ENCODE measurements at regions of chr22 and their contacts with region 1.

Region 1: DNA sequence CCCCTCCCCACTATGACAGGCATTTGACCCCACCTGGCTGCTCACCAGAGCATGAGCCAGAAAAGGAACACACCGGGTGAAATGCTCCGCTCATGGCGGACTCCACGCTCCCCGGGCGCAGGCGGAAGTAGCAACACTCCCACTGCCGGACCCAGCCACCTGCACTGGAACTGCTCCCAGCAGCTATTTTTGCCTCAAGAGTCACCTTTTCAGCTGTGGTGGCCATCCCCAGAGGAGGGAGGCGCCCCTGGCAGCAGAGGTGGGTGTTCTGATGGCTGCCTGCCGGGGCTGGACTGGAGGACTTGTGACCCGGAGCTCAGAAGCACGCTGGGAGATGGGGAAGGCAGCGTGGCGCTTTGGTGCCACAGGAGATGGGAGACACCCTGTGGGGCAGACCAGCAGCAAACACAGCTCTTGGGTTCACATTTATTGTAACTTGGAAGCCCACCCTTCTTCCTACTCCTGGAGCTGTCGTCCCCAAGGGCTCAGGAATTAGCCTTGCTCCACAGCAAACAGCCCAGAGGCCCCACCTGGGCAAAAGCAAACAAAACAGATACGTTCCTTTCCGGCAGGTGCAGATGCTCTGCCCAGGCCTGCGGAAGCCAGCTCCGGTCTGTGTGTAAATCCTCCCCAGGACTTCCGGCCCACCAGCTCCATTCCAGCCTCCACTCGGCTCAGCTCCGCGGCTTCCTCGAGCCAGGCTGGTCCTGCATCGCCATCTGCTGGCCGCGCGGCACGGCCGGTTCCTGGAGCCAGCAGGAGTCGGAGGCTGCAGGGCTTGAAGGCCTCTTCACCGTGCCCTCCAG is 3.7 kb downstream of the RPS19BP1 start:
- DNase-seq: peak; percentile 94
- ATAC-seq: peak; percentile 8
- H3K4me3 Mint-ChIP-seq: no peak overlapping the region
- H3K27ac Mint-ChIP-seq: no peak overlapping the region
- H3K4me1 Mint-ChIP-seq: peaks cover 65% of the 10 kb centered on the region
- H3K27me3 Mint-ChIP-seq: no peaks in the 10 kb centered on the region
- CTCF ChIP-seq: peak; percentile 76

Region 2: GRCh38 chr22:39343259-39344048 is 185.4 kb before region 1 on chr22:
- CTCF ChIA-PET with region 1: interaction called, 18 read pairs
- POLR2A ChIA-PET with region 1: no interaction called
- DNase-seq: peak; percentile 77
- ATAC-seq: peak; percentile 95
- H3K4me3 Mint-ChIP-seq: no peak overlapping the region
- H3K27ac Mint-ChIP-seq: no peak overlapping the region
- H3K4me1 Mint-ChIP-seq: peaks cover 18% of the 10 kb centered on the region
- H3K27me3 Mint-ChIP-seq: peaks cover 3% of the 10 kb centered on the region
- CTCF ChIP-seq: 0 out of 2 replicates have a peak, but pooled peaks have one; percentile 11

Region 3: GRCh38 chr22:39462443-39463221 is 66.3 kb before region 1 on chr22:
- CTCF ChIA-PET with region 1: interaction called, 17 read pairs
- POLR2A ChIA-PET with region 1: no interaction called
- DNase-seq: peak; percentile 62
- ATAC-seq: peak; percentile 81
- H3K4me3 Mint-ChIP-seq: no peak overlapping the region
- H3K27ac Mint-ChIP-seq: 0 out of 2 replicates have a peak overlapping the region, but pooled peaks have one; percentile 12
- H3K4me1 Mint-ChIP-seq: peaks cover 11% of the 10 kb centered on the region
- H3K27me3 Mint-ChIP-seq: peaks cover 21% of the 10 kb centered on the region
- CTCF ChIP-seq: no peak

Region 4: DNA sequence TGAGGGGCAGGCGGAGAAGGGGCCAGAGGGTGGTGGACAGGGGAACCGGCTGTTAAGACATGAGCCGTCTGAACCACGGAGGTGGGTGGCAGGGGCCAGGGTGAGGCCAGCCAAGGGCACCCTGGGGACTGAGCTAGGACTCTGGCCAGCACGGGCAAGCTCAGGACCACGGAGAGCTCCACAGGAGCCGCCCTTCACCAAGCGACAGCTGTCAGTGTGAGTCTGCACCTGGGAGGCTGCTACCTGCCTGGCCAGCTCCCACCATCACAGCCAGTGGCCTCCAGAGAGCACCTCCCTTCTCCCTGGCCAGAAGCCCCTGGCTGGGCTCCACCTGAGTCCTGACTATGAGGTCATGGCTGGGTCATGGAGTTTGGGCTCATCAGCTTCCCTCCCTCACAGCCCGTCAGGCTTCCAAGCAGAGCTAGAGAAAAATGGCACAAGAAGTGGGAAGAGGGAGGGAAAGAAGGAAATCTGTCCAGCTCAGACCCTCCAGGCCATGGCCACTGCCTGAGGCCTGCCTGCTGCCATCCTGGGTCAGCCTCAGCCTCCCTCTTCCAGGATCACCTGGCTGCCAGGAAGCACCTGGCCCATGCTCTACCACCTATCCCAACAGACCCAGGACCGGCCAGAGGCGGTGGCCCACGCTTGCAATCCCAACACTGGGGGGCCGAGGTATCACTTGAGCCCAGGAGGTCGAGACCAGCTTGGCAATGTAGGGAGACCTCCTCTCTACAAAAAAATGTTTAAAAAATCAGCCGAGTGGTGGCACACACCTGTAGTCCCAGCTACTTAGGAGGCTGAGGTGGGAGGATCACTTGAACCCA is 50.2 kb before region 1 on chr22:
- CTCF ChIA-PET with region 1: interaction called, 12 read pairs
- POLR2A ChIA-PET with region 1: no interaction called
- DNase-seq: peak; percentile 70
- ATAC-seq: peak; percentile 39
- H3K4me3 Mint-ChIP-seq: no peak overlapping the region
- H3K27ac Mint-ChIP-seq: no peak overlapping the region
- H3K4me1 Mint-ChIP-seq: peaks cover 23% of the 10 kb centered on the region
- H3K27me3 Mint-ChIP-seq: no peaks in the 10 kb centered on the region
- CTCF ChIP-seq: no peak

Region 5: DNA sequence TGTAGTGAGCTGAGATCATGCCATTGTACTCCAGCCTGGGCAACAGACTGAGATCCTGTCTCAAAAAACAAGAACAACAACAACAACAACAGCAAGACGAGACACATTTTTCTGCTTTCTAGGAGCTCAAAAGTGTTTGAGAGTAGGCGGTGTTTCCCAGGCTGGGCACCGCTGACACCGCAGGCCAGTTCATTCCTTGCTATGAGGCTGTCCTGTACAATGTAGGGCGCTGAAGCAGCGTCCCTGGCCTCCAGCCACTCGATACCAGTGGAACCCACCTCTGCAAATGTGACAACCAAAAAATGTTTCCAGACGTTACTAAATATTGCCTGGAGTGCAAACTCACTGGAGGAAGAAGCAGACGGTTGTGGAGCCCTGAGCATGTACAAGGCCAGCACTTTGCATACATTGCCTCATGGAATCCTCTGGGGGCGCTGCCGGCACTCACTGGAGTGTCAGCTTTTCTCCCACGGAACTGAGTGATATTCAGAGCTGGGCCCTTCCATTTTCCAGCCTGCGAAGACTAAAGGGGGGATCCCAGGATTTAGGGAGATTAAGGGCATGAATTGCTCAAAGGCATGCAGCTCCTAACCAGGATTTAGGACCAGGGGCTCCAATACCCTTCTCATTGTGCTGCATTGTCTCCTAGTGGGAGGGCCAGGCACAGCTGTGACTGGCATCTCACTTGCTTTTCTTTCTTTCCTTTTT is 32.6 kb before region 1 on chr22:
- CTCF ChIA-PET with region 1: interaction called, 45 read pairs
- POLR2A ChIA-PET with region 1: interaction called, 8 read pairs
- DNase-seq: peak; percentile 75
- ATAC-seq: peak; percentile 78
- H3K4me3 Mint-ChIP-seq: no peak overlapping the region
- H3K27ac Mint-ChIP-seq: no peak overlapping the region
- H3K4me1 Mint-ChIP-seq: peaks cover 2% of the 10 kb centered on the region
- H3K27me3 Mint-ChIP-seq: peaks cover 67% of the 10 kb centered on the region
- CTCF ChIP-seq: peak; percentile 70

Region 6: GRCh38 chr22:39514373-39514973 is 14.4 kb before region 1 on chr22:
- CTCF ChIA-PET with region 1: interaction called, 54 read pairs
- POLR2A ChIA-PET with region 1: interaction called, 15 read pairs
- DNase-seq: peak; percentile 73
- ATAC-seq: no peak; the same call in 1 of the 2 replicates
- H3K4me3 Mint-ChIP-seq: no peak overlapping the region
- H3K27ac Mint-ChIP-seq: no peak overlapping the region
- H3K4me1 Mint-ChIP-seq: peaks cover 8% of the 10 kb centered on the region
- H3K27me3 Mint-ChIP-seq: peaks cover 83% of the 10 kb centered on the region
- CTCF ChIP-seq: peak; percentile 66

Region 7: DNA sequence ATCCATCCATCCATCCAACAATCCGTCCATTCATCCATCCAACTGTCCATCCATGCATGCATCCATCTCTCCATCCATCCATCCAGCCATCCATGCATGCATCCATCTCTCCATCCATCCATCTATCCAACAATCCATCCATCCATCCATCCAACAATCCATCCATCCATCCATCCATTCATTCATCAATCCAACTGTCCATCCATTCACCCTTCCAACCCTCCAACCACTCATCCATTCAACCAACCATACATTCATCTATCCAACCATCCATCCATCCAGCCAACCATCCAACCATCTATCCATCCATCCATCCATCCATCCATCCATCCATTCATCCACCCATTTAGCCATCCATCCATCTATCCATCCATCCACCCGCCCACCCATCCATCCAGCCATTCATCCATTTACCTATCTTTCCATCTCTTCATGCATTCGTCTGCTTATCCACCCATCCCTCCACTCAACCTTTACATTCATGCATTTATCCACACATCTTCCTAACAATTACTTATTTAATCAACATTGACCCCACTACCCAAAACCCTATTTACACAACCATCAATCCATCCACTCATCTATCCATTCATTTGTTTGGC is 54.3 kb after region 1 on chr22:
- CTCF ChIA-PET with region 1: no interaction called
- POLR2A ChIA-PET with region 1: no interaction called
- DNase-seq: no peak
- ATAC-seq: no peak
- H3K4me3 Mint-ChIP-seq: no peak overlapping the region
- H3K27ac Mint-ChIP-seq: no peak overlapping the region
- H3K4me1 Mint-ChIP-seq: peaks cover 12% of the 10 kb centered on the region
- H3K27me3 Mint-ChIP-seq: peaks cover 3% of the 10 kb centered on the region
- CTCF ChIP-seq: no peak

Region 8: DNA sequence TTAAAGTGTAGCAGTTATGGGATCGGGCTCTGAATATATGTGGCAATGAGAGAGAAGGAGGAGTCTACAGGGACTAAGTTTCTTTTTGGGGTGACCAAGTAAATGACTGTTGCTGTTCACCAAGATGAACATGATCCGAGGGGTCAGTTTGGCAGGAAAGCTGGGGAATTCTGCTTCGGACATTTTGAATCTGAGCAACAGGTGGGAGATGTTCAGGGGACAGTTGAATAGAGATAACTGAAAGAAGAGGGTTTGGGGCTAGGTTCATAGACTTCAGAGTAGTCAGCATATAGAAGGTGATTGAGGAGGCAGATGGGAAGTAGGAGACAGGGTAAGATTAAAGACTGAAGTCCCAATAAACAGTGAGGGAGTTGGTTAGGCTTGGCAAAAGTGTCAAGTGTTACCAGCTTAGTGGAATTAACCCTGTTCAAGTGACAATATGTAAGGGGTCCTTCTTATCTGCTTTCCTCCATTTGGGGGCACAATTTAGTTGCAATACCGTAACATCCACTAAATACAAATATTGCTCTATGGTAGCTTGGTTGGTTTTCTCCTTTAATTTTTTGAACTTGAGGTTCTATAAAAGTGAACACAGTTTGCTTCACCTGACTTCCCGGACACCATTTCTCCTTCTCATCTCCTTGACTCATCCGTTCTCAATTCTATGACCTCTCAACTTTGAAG is 367.6 kb after region 1 on chr22:
- CTCF ChIA-PET with region 1: no interaction called
- POLR2A ChIA-PET with region 1: no interaction called
- DNase-seq: no peak
- ATAC-seq: no peak
- H3K4me3 Mint-ChIP-seq: no peak overlapping the region
- H3K27ac Mint-ChIP-seq: no peak overlapping the region
- H3K4me1 Mint-ChIP-seq: peaks cover 7% of the 10 kb centered on the region
- H3K27me3 Mint-ChIP-seq: peaks cover 6% of the 10 kb centered on the region
- CTCF ChIP-seq: no peak